ENCODE measurements at regions of chr2 and their contacts with region 1.

Region 1: GRCh38 chr2:54691445-54692135 is 31.9 kb upstream of the EML6 start:
- DNase-seq: no peak
- H3K4me3 Mint-ChIP-seq: no peak overlapping the region
- H3K27ac Mint-ChIP-seq: no peak overlapping the region
- H3K4me1 Mint-ChIP-seq: peaks cover 5% of the 10 kb centered on the region
- H3K27me3 Mint-ChIP-seq: peaks cover 18% of the 10 kb centered on the region

Region 2: GRCh38 chr2:54482715-54483114 is 208.9 kb before region 1 on chr2:
- CTCF ChIA-PET with region 1: no interaction called
- POLR2A ChIA-PET with region 1: no interaction called
- intact Hi-C with region 1: no loop called
- DNase-seq: no peak
- H3K4me3 Mint-ChIP-seq: no peak overlapping the region
- H3K27ac Mint-ChIP-seq: no peak overlapping the region
- H3K4me1 Mint-ChIP-seq: no peaks in the 10 kb centered on the region
- H3K27me3 Mint-ChIP-seq: peaks cover 1% of the 10 kb centered on the region

Region 3: DNA sequence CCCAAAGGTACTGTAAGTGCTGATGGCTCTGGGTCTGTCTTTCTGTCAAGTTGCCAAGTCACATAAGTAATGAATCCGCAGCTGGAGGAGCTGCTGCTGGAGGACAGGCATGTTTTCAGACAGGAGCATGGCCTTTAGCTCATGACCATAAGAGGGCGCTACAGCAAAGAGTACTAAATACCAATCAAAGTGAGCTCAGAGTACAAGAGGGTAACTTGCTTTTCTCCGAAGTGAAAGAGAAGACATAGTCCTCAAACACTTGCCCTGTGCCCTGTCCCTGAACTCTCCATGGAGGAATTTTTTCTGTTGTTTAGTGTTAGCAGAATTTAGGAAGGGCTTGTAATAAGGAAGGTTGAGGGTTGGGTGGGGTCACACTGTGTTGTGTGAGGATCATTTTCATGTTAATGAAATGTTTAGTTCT is 26.1 kb before region 1 on chr2:
- CTCF ChIA-PET with region 1: interaction called, 17 read pairs
- POLR2A ChIA-PET with region 1: no interaction called
- intact Hi-C with region 1: no loop called
- DNase-seq: peak; percentile 53
- H3K4me3 Mint-ChIP-seq: no peak overlapping the region
- H3K27ac Mint-ChIP-seq: no peak overlapping the region
- H3K4me1 Mint-ChIP-seq: peaks cover 2% of the 10 kb centered on the region
- H3K27me3 Mint-ChIP-seq: no peaks in the 10 kb centered on the region

Measured in activated CD4-positive, alpha-beta memory T cell treated with anti-CD3 and anti-CD28 coated beads for 36 hours (primary cell).